Naive thymus-derived CD4-positive, alpha-beta T cell (primary cell): ENCODE measurements at regions of chr2 and their contacts with region 1.

Region 1: GRCh38 chr2:62415019-62415431 is 91.0 kb downstream of the TMEM17 start:
- DNase-seq: no peak
- ATAC-seq: peak; percentile 29
- H3K4me3 ChIP-seq: no peak overlapping the region
- H3K4me3 Mint-ChIP-seq: peak overlapping the region in 1 of 10 donors; percentile 15
- H3K27ac ChIP-seq: no peak overlapping the region
- H3K27ac Mint-ChIP-seq: peak overlapping the region in 2 of 9 donors; percentile 19 to 23
- H3K4me1 ChIP-seq: peaks cover 0 to 7% of the 10 kb centered on the region in 2 donors
- H3K4me1 Mint-ChIP-seq: peaks cover 0 to 14% (median 0%) of the 10 kb centered on the region in 7 donors
- H3K27me3 ChIP-seq: no peaks in the 10 kb centered on the region
- H3K27me3 Mint-ChIP-seq: peaks cover 0 to 10% (median 5%) of the 10 kb centered on the region in 5 donors

Region 2: DNA sequence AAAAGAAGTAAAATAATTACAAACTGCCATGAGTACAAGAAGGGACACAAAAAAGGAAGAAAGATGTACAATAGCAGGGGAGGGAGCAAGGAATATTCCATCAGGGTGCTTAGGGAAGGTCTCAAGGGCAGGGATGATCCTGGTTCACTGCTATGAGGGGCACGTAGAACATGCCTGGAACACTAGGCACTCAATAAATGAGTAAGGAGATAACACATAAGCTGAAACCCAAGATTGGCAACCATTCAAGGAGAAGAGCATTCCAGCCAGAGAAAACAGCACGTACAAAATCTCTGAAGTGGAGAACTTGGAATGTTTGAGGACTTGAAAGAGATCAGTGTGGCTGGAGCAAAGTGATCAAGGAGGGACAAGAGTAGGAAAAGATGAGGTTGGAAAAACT is 664.4 kb before region 1 on chr2:
- CTCF ChIA-PET with region 1: no interaction called
- POLR2A ChIA-PET with region 1: no interaction called
- intact Hi-C with region 1: no loop called
- DNase-seq: no peak
- ATAC-seq: no peak
- H3K4me3 ChIP-seq: no peak overlapping the region
- H3K4me3 Mint-ChIP-seq: no peak overlapping the region
- H3K27ac ChIP-seq: no peak overlapping the region
- H3K27ac Mint-ChIP-seq: no peak overlapping the region
- H3K4me1 ChIP-seq: no peaks in the 10 kb centered on the region
- H3K4me1 Mint-ChIP-seq: peaks cover 0 to 4% (median 0%) of the 10 kb centered on the region in 7 donors
- H3K27me3 ChIP-seq: no peaks in the 10 kb centered on the region
- H3K27me3 Mint-ChIP-seq: peaks cover 0 to 4% (median 4%) of the 10 kb centered on the region in 5 donors

Region 3: GRCh38 chr2:61924895-61925663 is 489.9 kb before region 1 on chr2:
- CTCF ChIA-PET with region 1: interaction called, 11 read pairs
- POLR2A ChIA-PET with region 1: no interaction called
- intact Hi-C with region 1: no loop called
- DNase-seq: no peak
- ATAC-seq: no peak
- H3K4me3 ChIP-seq: no peak overlapping the region
- H3K4me3 Mint-ChIP-seq: no peak overlapping the region
- H3K27ac ChIP-seq: no peak overlapping the region
- H3K27ac Mint-ChIP-seq: peak overlapping the region in 1 of 9 donors; percentile 65
- H3K4me1 ChIP-seq: no peaks in the 10 kb centered on the region
- H3K4me1 Mint-ChIP-seq: peaks cover 0 to 10% (median 0%) of the 10 kb centered on the region in 7 donors
- H3K27me3 ChIP-seq: no peaks in the 10 kb centered on the region
- H3K27me3 Mint-ChIP-seq: no peaks in the 10 kb centered on the region

Region 4: DNA sequence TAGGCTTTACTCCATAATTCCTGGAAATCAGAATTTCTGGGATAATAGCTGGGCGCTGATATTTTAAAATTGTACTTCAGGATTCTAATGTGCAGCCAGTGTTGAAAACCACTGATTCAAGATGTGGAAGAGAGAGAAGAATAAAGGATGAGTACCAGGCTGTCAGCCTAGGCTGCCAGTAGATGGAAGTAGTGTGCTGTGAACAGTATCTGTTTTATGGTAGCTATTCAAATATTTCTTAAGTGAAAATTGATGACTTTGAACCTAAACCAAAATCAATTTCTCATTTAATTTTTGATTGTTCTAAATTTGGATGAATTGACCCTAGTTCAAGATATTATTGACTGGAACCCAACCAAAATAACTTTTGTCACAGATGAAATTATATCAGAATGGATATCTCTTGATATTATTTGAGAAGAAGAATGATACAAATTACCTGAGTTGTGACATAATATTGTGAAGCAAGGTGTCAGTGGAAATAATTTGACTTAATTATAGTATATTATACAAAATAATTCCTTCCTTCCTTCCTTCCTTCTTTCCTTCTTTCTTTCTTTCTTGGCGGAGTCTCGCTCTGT is 421.5 kb before region 1 on chr2:
- CTCF ChIA-PET with region 1: interaction called, 4 read pairs
- POLR2A ChIA-PET with region 1: interaction called, 3 read pairs
- intact Hi-C with region 1: loop called in 1 of 2 experiments (anchors 1 kb)
- DNase-seq: peak in 3 of 9 donors; percentile 11 to 20 (median 12)
- ATAC-seq: peak; percentile 63
- H3K4me3 ChIP-seq: no peak overlapping the region
- H3K4me3 Mint-ChIP-seq: no peak overlapping the region
- H3K27ac ChIP-seq: no peak overlapping the region
- H3K27ac Mint-ChIP-seq: no peak overlapping the region
- H3K4me1 ChIP-seq: no peaks in the 10 kb centered on the region
- H3K4me1 Mint-ChIP-seq: peaks cover 5 to 13% (median 8%) of the 10 kb centered on the region in 7 donors
- H3K27me3 ChIP-seq: no peaks in the 10 kb centered on the region
- H3K27me3 Mint-ChIP-seq: no peaks in the 10 kb centered on the region

Region 5: GRCh38 chr2:62306751-62307468 is 108.1 kb before region 1 on chr2:
- CTCF ChIA-PET with region 1: no interaction called
- POLR2A ChIA-PET with region 1: no interaction called
- intact Hi-C with region 1: loop called in 1 of 2 experiments (anchors 10 kb)
- DNase-seq: peak in 1 of 9 donors; percentile 42
- ATAC-seq: peak; percentile 25
- H3K4me3 ChIP-seq: no peak overlapping the region
- H3K4me3 Mint-ChIP-seq: peak overlapping the region in 5 of 10 donors; percentile 23 to 67 (median 54)
- H3K27ac ChIP-seq: no peak overlapping the region
- H3K27ac Mint-ChIP-seq: peak overlapping the region in 7 of 9 donors; percentile 1 to 86 (median 52)
- H3K4me1 ChIP-seq: peaks cover 29 to 84% of the 10 kb centered on the region in 2 donors
- H3K4me1 Mint-ChIP-seq: peaks cover 54 to 79% (median 71%) of the 10 kb centered on the region in 7 donors
- H3K27me3 ChIP-seq: no peaks in the 10 kb centered on the region
- H3K27me3 Mint-ChIP-seq: peaks cover 0 to 2% (median 0%) of the 10 kb centered on the region in 5 donors

Region 6: GRCh38 chr2:62475172-62476011 is 60.4 kb after region 1 on chr2:
- CTCF ChIA-PET with region 1: no interaction called
- POLR2A ChIA-PET with region 1: no interaction called
- intact Hi-C with region 1: no loop called
- DNase-seq: no peak
- ATAC-seq: peak; percentile 55
- H3K4me3 ChIP-seq: no peak overlapping the region
- H3K4me3 Mint-ChIP-seq: peak overlapping the region in 8 of 10 donors; percentile 11 to 59 (median 52)
- H3K27ac ChIP-seq: no peak overlapping the region
- H3K27ac Mint-ChIP-seq: no peak overlapping the region
- H3K4me1 ChIP-seq: peaks cover 0 to 14% of the 10 kb centered on the region in 2 donors
- H3K4me1 Mint-ChIP-seq: peaks cover 0 to 11% (median 6%) of the 10 kb centered on the region in 7 donors
- H3K27me3 ChIP-seq: no peaks in the 10 kb centered on the region
- H3K27me3 Mint-ChIP-seq: peaks cover 4 to 22% (median 9%) of the 10 kb centered on the region in 5 donors

Region 7: GRCh38 chr2:62505750-62506420 is 90.9 kb after region 1 on chr2 and contains the start of gene TMEM17:
- CTCF ChIA-PET with region 1: no interaction called
- POLR2A ChIA-PET with region 1: no interaction called
- intact Hi-C with region 1: no loop called
- DNase-seq: peak in 3 of 9 donors; percentile 1 to 47 (median 17)
- ATAC-seq: peak; percentile 77
- H3K4me3 ChIP-seq: peak within 1 kb of the TSS; percentile 44
- H3K4me3 Mint-ChIP-seq: peak within 1 kb of the TSS; percentile 61 to 83 (median 74)
- H3K27ac ChIP-seq: no peak within 1 kb of the TSS
- H3K27ac Mint-ChIP-seq: no peak within 1 kb of the TSS
- H3K4me1 ChIP-seq: no peaks in the 10 kb centered on the region
- H3K4me1 Mint-ChIP-seq: peaks cover 6 to 12% (median 10%) of the 10 kb centered on the region in 7 donors
- H3K27me3 ChIP-seq: no peaks in the 10 kb centered on the region
- H3K27me3 Mint-ChIP-seq: peaks cover 23 to 40% (median 29%) of the 10 kb centered on the region in 5 donors
- total RNA-seq, gene TMEM17: 0.15 TPM in 1 of 5 experiments, not detected in the others